Tibial artery (tissue), 4 donors: ENCODE measurements at regions of chr2 and their contacts with region 1.

Region 1: GRCh38 chr2:147600223-147600622 is 244.6 kb upstream of the ACVR2A start:
- DNase-seq: no peak
- H3K4me3 ChIP-seq: no peak overlapping the region
- H3K27ac ChIP-seq: no peak overlapping the region
- H3K4me1 ChIP-seq: no peaks in the 10 kb centered on the region
- H3K27me3 ChIP-seq: no peaks in the 10 kb centered on the region
- CTCF ChIP-seq: no peak

Region 2: DNA sequence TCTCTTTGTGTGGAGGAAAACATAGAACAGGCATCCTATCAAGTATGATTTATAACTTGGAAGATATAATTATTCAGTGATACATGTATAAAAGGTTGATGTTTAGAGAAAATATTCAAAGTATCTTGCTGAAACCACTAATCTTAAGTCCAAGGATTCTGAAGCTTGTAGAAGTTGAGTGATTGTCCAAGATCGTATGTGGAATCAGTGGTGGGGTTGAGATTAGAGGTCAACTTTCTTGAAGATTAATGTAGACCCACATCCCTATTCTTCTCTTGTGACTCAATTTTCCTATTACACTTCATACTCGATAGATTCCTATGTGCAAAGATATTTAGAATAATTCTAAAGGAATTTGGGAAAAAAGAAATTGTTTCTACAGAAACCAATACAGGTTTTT is 1321.3 kb before region 1 on chr2:
- intact Hi-C with region 1: loop called (anchors 5 kb)
- DNase-seq: no peak
- H3K4me3 ChIP-seq: no peak overlapping the region
- H3K27ac ChIP-seq: no peak overlapping the region
- H3K4me1 ChIP-seq: no peaks in the 10 kb centered on the region
- H3K27me3 ChIP-seq: no peaks in the 10 kb centered on the region
- CTCF ChIP-seq: no peak